PC-3 (cell line): ENCODE measurements at regions of chr18 and their contacts with region 1.

Region 1: GRCh38 chr18:42114310-42114943 is 159.4 kb downstream of the PIK3C3 start:
- DNase-seq: peak; percentile 66
- ATAC-seq: peak; percentile 80
- H3K4me3 ChIP-seq: no peak overlapping the region
- H3K27ac ChIP-seq: no peak overlapping the region
- H3K4me1 ChIP-seq: no peaks in the 10 kb centered on the region
- H3K27me3 ChIP-seq: no peaks in the 10 kb centered on the region
- CTCF ChIP-seq: peak; percentile 73

Region 2: GRCh38 chr18:41745166-41746049 is 369.0 kb before region 1 on chr18:
- CTCF ChIA-PET with region 1: no interaction called
- POLR2A ChIA-PET with region 1: no interaction called
- intact Hi-C with region 1: no loop called
- DNase-seq: peak; percentile 57
- ATAC-seq: peak; percentile 93
- H3K4me3 ChIP-seq: no peak overlapping the region
- H3K27ac ChIP-seq: no peak overlapping the region
- H3K4me1 ChIP-seq: peaks cover 10% of the 10 kb centered on the region; the same call in 1 of the 2 replicates
- H3K27me3 ChIP-seq: no peaks in the 10 kb centered on the region
- CTCF ChIP-seq: peak; percentile 65

Region 3: DNA sequence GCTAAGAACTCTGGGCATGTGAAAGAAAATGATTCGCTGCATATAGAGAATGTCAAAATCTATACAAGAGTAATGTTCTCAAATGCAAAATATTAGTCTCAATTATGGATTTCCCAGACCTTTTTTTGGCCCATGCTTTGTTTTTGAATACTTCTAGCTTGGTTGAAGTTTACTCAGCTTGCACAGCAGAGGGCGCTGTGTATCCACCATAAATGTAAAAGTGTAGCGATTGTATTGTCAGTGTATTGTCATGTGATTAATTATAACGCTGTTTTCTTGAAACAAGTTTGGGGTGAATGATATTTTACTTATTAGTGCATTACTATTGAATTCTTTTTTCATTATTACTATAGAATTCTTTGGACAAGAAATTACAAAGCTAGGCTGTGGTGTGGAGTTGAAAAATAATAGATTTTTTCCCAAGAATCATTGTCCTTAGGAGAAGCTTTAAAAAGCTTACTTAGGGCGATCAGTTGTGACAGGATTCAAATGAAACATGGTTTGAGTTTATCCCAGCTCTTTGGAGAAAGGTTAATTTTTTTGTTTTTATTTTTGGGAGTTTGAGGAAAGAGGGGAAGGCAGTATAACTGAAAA is 61.1 kb before region 1 on chr18:
- CTCF ChIA-PET with region 1: interaction called, 4 read pairs
- POLR2A ChIA-PET with region 1: no interaction called
- intact Hi-C with region 1: loop called (anchors 2 kb)
- DNase-seq: peak; percentile 37
- ATAC-seq: peak; percentile 63
- H3K4me3 ChIP-seq: no peak overlapping the region
- H3K27ac ChIP-seq: no peak overlapping the region
- H3K4me1 ChIP-seq: peaks cover 6% of the 10 kb centered on the region
- H3K27me3 ChIP-seq: no peaks in the 10 kb centered on the region
- CTCF ChIP-seq: peak; percentile 62

Region 4: DNA sequence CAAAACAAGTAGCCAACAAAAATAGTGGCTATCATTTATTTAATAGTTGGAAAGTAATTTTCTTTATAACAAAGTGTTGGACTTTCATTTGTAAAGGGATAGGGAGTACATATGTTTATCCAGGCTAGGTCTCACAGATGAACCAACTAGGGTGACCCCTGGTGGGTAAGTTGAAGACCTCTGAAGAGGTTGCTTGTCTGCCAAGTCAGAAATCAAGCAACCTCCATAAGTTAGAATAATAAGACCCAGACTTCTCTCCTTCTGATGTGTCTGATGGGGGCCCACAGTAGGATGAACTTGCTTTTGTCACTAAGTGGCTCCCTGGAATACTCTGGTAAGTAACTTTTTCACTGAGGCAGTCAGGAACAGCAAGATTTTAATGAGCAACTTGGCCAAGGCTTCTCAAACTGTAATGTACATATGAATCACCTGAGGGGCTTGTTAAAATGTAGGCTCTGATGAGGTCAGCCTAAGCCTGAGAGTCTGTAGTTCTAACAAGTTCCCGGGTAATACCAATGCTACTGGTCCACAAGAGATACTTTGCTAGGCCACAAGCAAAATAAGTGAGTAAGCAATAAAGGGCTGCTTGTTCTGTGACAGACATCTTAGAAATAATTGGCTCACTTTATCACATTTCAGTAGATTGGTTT is 160.2 kb after region 1 on chr18:
- CTCF ChIA-PET with region 1: interaction called, 5 read pairs
- POLR2A ChIA-PET with region 1: no interaction called
- intact Hi-C with region 1: loop called (anchors 1 kb)
- DNase-seq: peak; percentile 6
- ATAC-seq: peak; percentile 81
- H3K4me3 ChIP-seq: no peak overlapping the region
- H3K27ac ChIP-seq: no peak overlapping the region
- H3K4me1 ChIP-seq: no peaks in the 10 kb centered on the region
- H3K27me3 ChIP-seq: no peaks in the 10 kb centered on the region
- CTCF ChIP-seq: peak; percentile 45; the same call in 1 of the 2 replicates

Region 5: DNA sequence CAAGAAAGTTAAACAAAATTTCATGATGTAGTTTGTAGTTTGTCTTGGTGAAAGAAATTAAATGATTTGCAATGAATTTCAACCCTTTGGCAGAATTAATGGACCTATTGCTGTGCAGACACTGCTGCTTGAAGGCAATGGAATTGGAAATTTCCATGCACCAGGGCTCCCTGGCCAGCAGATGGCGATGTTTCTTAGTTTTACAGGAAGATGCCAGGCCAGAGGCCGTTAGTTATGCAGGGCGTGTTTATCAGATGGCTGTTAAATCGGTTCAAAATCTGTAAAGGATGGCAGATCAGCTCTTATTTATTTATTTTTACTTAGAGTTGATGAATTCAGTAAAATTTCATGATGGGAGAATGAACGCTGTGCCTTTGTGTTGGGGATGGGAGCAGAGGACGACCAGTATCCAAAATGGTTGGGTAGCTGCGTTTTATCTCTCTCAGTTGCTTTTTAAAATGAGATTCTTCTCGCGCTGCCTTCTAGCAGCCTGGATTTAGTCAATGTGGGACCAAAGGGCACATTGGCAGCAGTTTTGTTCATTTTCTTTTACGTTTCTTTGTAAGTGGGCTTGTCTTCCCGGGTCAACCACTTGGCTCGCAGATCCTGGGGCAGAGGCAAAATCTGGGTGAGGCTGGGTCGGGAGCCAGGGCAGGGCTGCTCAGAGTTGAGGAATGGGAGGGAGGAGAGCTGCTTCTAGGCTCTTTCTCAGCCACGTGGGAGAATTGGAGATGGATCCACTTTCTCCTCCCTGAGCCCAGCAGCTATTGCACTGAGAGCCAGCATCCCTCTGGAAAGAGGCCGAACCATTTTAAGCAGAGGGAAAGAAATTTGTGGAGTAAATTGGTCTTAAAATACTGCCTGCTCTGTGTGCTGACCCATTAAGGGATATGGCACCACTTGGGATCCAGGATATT is 184.6 kb after region 1 on chr18:
- CTCF ChIA-PET with region 1: no interaction called
- POLR2A ChIA-PET with region 1: no interaction called
- intact Hi-C with region 1: loop called (anchors 5 kb)
- DNase-seq: peak; percentile 53
- ATAC-seq: peak; percentile 58; the same call in 1 of the 2 replicates
- H3K4me3 ChIP-seq: no peak overlapping the region
- H3K27ac ChIP-seq: no peak overlapping the region
- H3K4me1 ChIP-seq: no peaks in the 10 kb centered on the region
- H3K27me3 ChIP-seq: no peaks in the 10 kb centered on the region
- CTCF ChIP-seq: peak; percentile 70

Region 6: GRCh38 chr18:43271593-43272432 is 1157.4 kb after region 1 on chr18:
- CTCF ChIA-PET with region 1: interaction called, 5 read pairs
- POLR2A ChIA-PET with region 1: no interaction called
- intact Hi-C with region 1: loop called (anchors 1 kb)
- DNase-seq: peak; percentile 60
- ATAC-seq: no peak
- H3K4me3 ChIP-seq: no peak overlapping the region
- H3K27ac ChIP-seq: no peak overlapping the region
- H3K4me1 ChIP-seq: no peaks in the 10 kb centered on the region
- H3K27me3 ChIP-seq: no peaks in the 10 kb centered on the region
- CTCF ChIP-seq: peak; percentile 39; the same call in 1 of the 2 replicates

Region 7: GRCh38 chr18:43563780-43564179 is 1449.4 kb after region 1 on chr18:
- CTCF ChIA-PET with region 1: no interaction called
- POLR2A ChIA-PET with region 1: no interaction called
- intact Hi-C with region 1: loop called (anchors 5 kb)
- DNase-seq: peak; percentile 38
- ATAC-seq: peak; percentile 65
- H3K4me3 ChIP-seq: no peak overlapping the region
- H3K27ac ChIP-seq: no peak overlapping the region
- H3K4me1 ChIP-seq: no peaks in the 10 kb centered on the region
- H3K27me3 ChIP-seq: no peaks in the 10 kb centered on the region
- CTCF ChIP-seq: peak; percentile 54